Esophagus muscularis mucosa (tissue), 4 donors: ENCODE measurements at regions of chr17 and their contacts with region 1.

Region 1: GRCh38 chr17:76868176-76868668 is at the start of gene MGAT5B:
- DNase-seq: no peak
- H3K4me3 ChIP-seq: peak within 1 kb of the TSS; percentile 44 to 63 (median 48)
- H3K27ac ChIP-seq: no peak within 1 kb of the TSS
- H3K4me1 ChIP-seq: peaks cover 12 to 30% (median 26%) of the 10 kb centered on the region in 4 donors
- H3K27me3 ChIP-seq: peaks cover 5 to 88% (median 32%) of the 10 kb centered on the region in 4 donors
- CTCF ChIP-seq: peak; percentile 89 to 92 (median 90)
- EP300 ChIP-seq: no peak
- POLR2A ChIP-seq: no peak
- total RNA-seq, gene MGAT5B: under 0.01 to 1.7 (median 0.43) TPM

Region 2: GRCh38 chr17:77054936-77055335 is 186.7 kb after region 1 on chr17:
- intact Hi-C with region 1: loop called (anchors 2 kb)
- DNase-seq: no peak
- H3K4me3 ChIP-seq: no peak overlapping the region
- H3K27ac ChIP-seq: no peak overlapping the region
- H3K4me1 ChIP-seq: peaks cover 0 to 5% (median 2%) of the 10 kb centered on the region in 4 donors
- H3K27me3 ChIP-seq: peaks cover 0 to 99% (median 7%) of the 10 kb centered on the region in 4 donors
- CTCF ChIP-seq: no peak
- EP300 ChIP-seq: no peak
- POLR2A ChIP-seq: no peak

Region 3: DNA sequence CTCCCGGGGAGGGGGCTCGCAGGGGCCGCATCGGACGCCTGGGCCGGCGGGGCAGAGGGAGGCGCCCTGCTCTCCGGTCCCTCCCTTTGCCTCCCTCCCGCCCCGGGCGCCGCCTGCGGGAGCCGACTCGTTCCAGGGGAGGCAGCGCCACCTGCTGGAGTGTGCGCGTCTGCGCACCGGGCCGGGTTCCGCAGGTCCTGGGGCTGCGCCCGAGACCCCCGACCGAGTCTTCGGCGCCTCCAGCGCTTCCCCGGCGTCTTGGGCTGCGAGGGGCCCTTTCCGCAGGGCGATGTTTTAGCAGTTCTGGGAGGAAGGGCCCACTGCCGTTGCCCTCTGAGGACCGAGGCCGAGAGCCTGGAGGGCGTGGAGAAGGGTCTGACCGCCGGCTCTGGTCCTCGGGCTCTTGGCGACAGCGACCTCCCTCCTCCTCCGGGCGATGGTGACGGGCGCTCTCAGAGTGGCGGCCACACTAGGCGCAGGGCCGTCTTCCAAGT is 378.9 kb after region 1 on chr17:
- intact Hi-C with region 1: loop called (anchors 5 kb)
- DNase-seq: peak; percentile 94
- H3K4me3 ChIP-seq: peak overlapping the region; percentile 66 to 70 (median 68)
- H3K27ac ChIP-seq: peak overlapping the region; percentile 53 to 71 (median 53)
- H3K4me1 ChIP-seq: peaks cover 10 to 17% (median 15%) of the 10 kb centered on the region in 4 donors
- H3K27me3 ChIP-seq: peaks cover 0 to 14% (median 0%) of the 10 kb centered on the region in 4 donors
- CTCF ChIP-seq: peak in 2 of 3 experiments; percentile 99
- EP300 ChIP-seq: no peak
- POLR2A ChIP-seq: no peak